B cell (primary cell): ENCODE measurements at regions of chr12 and their contacts with region 1.

Region 1: DNA sequence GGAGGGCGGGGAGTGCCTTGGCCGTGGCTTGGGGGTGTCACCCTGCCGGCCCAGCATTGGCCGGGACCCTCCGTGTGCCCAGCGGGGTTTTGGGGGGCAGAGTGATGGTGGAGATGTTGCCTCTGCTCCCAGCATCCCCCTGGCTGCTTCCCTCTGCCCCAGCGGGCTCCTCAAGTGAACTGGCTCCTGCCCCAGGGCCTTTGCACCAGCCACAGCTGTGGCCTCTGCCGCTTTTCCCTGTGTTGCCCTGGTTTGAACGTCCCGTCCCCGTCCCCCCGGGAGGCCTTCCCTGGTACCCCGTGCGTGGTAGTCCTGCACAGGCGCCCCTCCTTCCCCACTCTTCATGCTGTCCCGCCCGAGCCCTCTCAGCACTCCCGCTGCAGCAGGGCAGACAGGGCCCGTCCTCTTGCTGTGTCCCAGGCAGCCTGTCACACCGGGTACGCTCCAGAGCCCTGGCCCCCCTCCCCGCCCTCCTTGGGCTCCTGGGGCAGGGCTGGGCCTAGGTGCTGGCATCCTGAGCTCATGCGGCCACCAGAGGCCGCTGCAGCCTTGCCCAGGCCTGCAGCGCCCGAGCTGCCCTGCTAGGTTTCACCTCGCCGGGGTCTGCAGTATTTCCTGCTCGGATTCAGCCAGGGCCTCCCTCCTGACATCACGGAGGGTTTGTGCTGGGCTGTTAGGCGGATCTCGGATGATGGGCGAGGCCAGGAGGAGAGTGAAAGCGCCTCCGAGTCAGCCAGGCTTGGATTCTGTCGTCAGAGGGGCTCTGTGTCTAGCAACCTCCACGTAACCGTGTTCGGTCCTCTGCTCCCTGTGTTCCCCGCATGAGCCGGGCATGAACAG is 9.5 kb downstream of the NOC4L start:
- DNase-seq: peak; percentile 84
- ATAC-seq: peak; percentile 94
- H3K4me3 ChIP-seq: peak overlapping the region in 2 of 5 experiments; percentile 20 to 37
- H3K4me3 Mint-ChIP-seq: peak overlapping the region; percentile 54
- H3K27ac ChIP-seq: no peak overlapping the region
- H3K27ac Mint-ChIP-seq: no peak overlapping the region
- H3K4me1 ChIP-seq: peaks cover 3 to 11% of the 10 kb centered on the region in 2 donors
- H3K4me1 Mint-ChIP-seq: peaks cover 9% of the 10 kb centered on the region
- H3K27me3 ChIP-seq: no peaks in the 10 kb centered on the region
- H3K27me3 Mint-ChIP-seq: no peaks in the 10 kb centered on the region
- CTCF ChIP-seq: peak; percentile 91

Region 2: DNA sequence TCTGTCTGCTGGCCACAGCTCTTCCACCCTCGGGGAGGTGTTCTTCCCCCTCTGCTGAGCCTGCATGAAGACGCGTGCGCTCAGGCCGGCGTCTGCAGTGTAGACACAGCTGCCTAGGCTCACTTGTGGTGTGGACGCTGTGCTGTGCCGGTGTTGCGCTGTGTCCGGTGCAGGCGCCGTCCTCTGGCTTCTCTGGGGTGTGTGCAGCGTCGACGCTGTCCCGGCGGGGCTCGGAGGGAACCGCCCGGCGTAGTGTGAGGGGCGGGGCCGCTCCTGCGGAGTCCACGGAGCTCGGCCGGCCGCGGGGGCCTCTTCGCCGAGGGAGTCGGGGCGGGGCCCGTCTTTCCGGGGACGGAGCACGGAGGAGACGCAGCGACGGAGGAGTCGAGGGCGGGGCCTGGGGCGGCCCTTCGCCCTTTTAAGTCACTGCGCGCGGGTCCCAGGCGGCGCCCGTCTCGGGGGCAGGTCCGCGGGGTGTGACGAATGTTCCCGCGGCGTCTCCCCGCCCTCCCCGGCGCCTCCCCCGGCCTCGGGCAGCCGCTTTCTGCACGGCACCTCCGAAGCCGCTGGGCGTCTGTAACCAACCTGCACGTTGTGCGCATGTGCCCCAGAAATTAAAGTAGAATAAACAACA is 35.8 kb after region 1 on chr12:
- CTCF ChIA-PET with region 1: interaction called, 6 read pairs
- POLR2A ChIA-PET with region 1: no interaction called
- intact Hi-C with region 1: loop called (anchors 1 kb)
- DNase-seq: peak; percentile 89
- ATAC-seq: peak; percentile 95
- H3K4me3 ChIP-seq: peak overlapping the region; percentile 48 to 69 (median 61)
- H3K4me3 Mint-ChIP-seq: peak overlapping the region; percentile 90
- H3K27ac ChIP-seq: peak overlapping the region; percentile 42 to 47
- H3K27ac Mint-ChIP-seq: peak overlapping the region; percentile 72
- H3K4me1 ChIP-seq: peaks cover 29 to 40% of the 10 kb centered on the region in 2 donors
- H3K4me1 Mint-ChIP-seq: peaks cover 14% of the 10 kb centered on the region
- H3K27me3 ChIP-seq: peaks cover 0 to 2% (median under 1%) of the 10 kb centered on the region in 4 experiments
- H3K27me3 Mint-ChIP-seq: no peaks in the 10 kb centered on the region
- CTCF ChIP-seq: no peak

Region 3: GRCh38 chr12:132218915-132219314 is 65.2 kb after region 1 on chr12:
- CTCF ChIA-PET with region 1: interaction called, 19 read pairs
- POLR2A ChIA-PET with region 1: no interaction called
- intact Hi-C with region 1: no loop called
- DNase-seq: peak; percentile 47
- ATAC-seq: no peak
- H3K4me3 ChIP-seq: no peak overlapping the region
- H3K4me3 Mint-ChIP-seq: no peak overlapping the region
- H3K27ac ChIP-seq: no peak overlapping the region
- H3K27ac Mint-ChIP-seq: no peak overlapping the region
- H3K4me1 ChIP-seq: peaks cover 13 to 29% of the 10 kb centered on the region in 2 donors
- H3K4me1 Mint-ChIP-seq: peaks cover 15% of the 10 kb centered on the region
- H3K27me3 ChIP-seq: peaks cover 0 to 23% (median 2%) of the 10 kb centered on the region in 4 experiments
- H3K27me3 Mint-ChIP-seq: peaks cover 12% of the 10 kb centered on the region
- CTCF ChIP-seq: peak; percentile 34

Region 4: DNA sequence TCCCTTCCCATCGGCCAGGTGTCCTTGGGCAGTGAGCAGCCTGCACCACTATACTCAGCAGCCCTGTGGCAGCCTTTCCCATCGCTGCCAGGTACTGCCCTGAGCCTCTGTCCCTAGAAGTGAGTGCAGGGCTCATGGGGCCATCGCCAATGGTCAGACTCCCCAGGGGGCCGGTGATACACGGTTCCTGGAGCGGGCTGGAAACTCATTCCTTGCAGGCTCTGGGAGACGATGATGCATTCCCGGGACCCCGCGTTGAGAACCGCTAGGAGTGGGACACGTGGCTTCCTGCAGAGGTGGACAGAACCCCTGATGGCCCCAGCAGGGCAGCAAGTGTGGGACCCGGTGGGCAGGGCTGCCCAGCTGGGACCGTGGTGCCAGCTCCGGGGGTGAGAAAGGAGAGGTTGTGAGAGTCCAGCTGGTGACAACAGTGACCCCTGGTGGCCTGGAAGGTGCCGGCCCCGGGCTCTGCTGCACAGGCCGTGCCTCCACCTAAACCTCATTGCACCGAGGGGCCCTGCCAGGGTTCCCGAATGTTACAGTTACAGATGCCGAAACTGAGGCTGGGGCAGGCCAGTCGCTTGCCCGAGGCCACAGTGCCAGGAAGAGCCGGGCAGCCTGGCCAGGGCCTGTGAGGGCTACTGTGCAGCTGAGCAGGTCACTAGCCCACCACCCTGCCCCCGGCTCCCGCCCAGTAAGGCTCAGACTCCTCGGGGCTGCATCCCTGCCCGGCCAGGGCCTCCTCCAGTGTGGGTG is 370.0 kb after region 1 on chr12:
- CTCF ChIA-PET with region 1: interaction called, 20 read pairs
- POLR2A ChIA-PET with region 1: interaction called, 10 read pairs
- intact Hi-C with region 1: loop called (anchors 1 kb)
- DNase-seq: peak; percentile 82
- ATAC-seq: peak; percentile 79
- H3K4me3 ChIP-seq: no peak overlapping the region
- H3K4me3 Mint-ChIP-seq: no peak overlapping the region
- H3K27ac ChIP-seq: no peak overlapping the region
- H3K27ac Mint-ChIP-seq: no peak overlapping the region
- H3K4me1 ChIP-seq: peaks cover 5 to 12% of the 10 kb centered on the region in 2 donors
- H3K4me1 Mint-ChIP-seq: peaks cover 11% of the 10 kb centered on the region
- H3K27me3 ChIP-seq: no peaks in the 10 kb centered on the region
- H3K27me3 Mint-ChIP-seq: no peaks in the 10 kb centered on the region
- CTCF ChIP-seq: peak; percentile 90

Region 5: GRCh38 chr12:132560614-132561426 is 407.1 kb after region 1 on chr12:
- CTCF ChIA-PET with region 1: interaction called, 11 read pairs
- POLR2A ChIA-PET with region 1: no interaction called
- intact Hi-C with region 1: loop called (anchors 1 kb)
- DNase-seq: peak; percentile 88
- ATAC-seq: peak; percentile 59
- H3K4me3 ChIP-seq: peak overlapping the region in 4 of 5 experiments; percentile 44 to 64 (median 58)
- H3K4me3 Mint-ChIP-seq: peak overlapping the region; percentile 83
- H3K27ac ChIP-seq: peak overlapping the region in 1 of 2 donors; percentile 18
- H3K27ac Mint-ChIP-seq: peak overlapping the region; percentile 67
- H3K4me1 ChIP-seq: peaks cover 27 to 35% of the 10 kb centered on the region in 2 donors
- H3K4me1 Mint-ChIP-seq: peaks cover 30% of the 10 kb centered on the region
- H3K27me3 ChIP-seq: no peaks in the 10 kb centered on the region
- H3K27me3 Mint-ChIP-seq: no peaks in the 10 kb centered on the region
- CTCF ChIP-seq: peak; percentile 83

Region 6: GRCh38 chr12:132614861-132615578 is 461.3 kb after region 1 on chr12:
- CTCF ChIA-PET with region 1: interaction called, 55 read pairs
- POLR2A ChIA-PET with region 1: interaction called, 3 read pairs
- intact Hi-C with region 1: no loop called
- DNase-seq: peak; percentile 86
- ATAC-seq: peak; percentile 84
- H3K4me3 ChIP-seq: no peak overlapping the region
- H3K4me3 Mint-ChIP-seq: peak overlapping the region; percentile 16
- H3K27ac ChIP-seq: no peak overlapping the region
- H3K27ac Mint-ChIP-seq: peak overlapping the region; percentile 32
- H3K4me1 ChIP-seq: peaks cover 14 to 19% of the 10 kb centered on the region in 2 donors
- H3K4me1 Mint-ChIP-seq: peaks cover 16% of the 10 kb centered on the region
- H3K27me3 ChIP-seq: peaks cover 0 to 53% (median 33%) of the 10 kb centered on the region in 4 experiments
- H3K27me3 Mint-ChIP-seq: peaks cover 41% of the 10 kb centered on the region
- CTCF ChIP-seq: peak; percentile 89